K562 (cell line): ENCODE measurements at regions of chr3 and their contacts with region 1.

Region 1: GRCh38 chr3:170414202-170414663 is 4.4 kb upstream of the CLDN11 start:
- DNase-seq: peak; percentile 58 to 75 (median 63)
- ATAC-seq: peak; percentile 85
- H3K4me3 ChIP-seq: no peak overlapping the region
- H3K27ac ChIP-seq: no peak overlapping the region
- H3K4me1 ChIP-seq: peaks cover 0 to 9% of the 10 kb centered on the region in 2 experiments; a peak in 1 of 5 replicates
- H3K27me3 ChIP-seq: no peaks in the 10 kb centered on the region
- CTCF ChIP-seq: peak; percentile 91 to 98 (median 93)
- EP300 ChIP-seq: no peak
- POLR2A ChIP-seq: no peak
- RAD21 ChIP-seq: peak; percentile 99

Region 2: GRCh38 chr3:169764452-169765274 is 649.6 kb before region 1 on chr3 and contains the start of gene TERC:
- CTCF ChIA-PET with region 1: no interaction called
- POLR2A ChIA-PET with region 1: no interaction called
- in situ Hi-C with region 1: no loop called
- intact Hi-C with region 1: loop called (anchors 5 kb)
- DNase-seq: peak; percentile 74 to 93 (median 82)
- ATAC-seq: peak; percentile 96
- H3K4me3 ChIP-seq: peak within 1 kb of the TSS; percentile 71
- H3K27ac ChIP-seq: peak within 1 kb of the TSS; percentile 95
- H3K4me1 ChIP-seq: peaks cover 6 to 20% of the 10 kb centered on the region in 2 experiments
- H3K27me3 ChIP-seq: no peaks in the 10 kb centered on the region
- CTCF ChIP-seq: no peak
- EP300 ChIP-seq: no peak
- POLR2A ChIP-seq: peak; percentile 96
- RAD21 ChIP-seq: peak in 1 of 2 experiments; percentile 14; a peak in 1 of 4 replicates
- polyA plus RNA-seq, gene TERC: not detected

Region 3: DNA sequence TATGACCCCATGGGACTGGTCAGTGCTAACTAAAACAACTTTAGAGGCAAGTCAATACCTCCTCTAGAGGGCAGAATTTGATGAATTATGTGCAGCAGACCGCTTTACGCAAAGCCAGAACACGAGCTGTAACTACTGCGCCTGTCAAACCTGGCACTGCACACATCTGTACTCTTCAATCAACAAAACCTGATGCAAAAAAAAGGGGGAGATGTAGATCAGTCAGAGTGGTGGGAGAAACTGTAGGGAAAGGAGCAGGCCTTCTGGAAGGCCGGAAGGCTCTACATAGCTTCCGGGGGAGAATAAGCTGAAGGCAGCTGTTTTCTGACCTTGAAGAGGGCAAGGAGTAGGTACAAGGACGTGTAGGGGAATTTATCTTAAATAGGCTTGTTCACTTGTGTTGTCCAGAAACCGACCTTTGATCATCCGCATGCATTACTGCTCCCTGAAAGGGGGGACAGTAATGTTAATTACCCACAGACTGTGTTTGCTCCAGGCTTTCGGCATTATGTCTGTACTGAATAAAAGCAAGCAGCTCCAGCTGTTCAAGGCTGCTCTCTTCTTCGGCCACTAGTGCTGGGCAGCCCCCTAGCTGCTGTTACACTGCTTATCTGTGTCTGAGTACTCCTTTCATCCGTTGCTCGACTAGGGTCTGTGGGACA is 335.5 kb before region 1 on chr3:
- CTCF ChIA-PET with region 1: no interaction called
- POLR2A ChIA-PET with region 1: no interaction called
- in situ Hi-C with region 1: no loop called
- intact Hi-C with region 1: loop called (anchors 5 kb)
- DNase-seq: peak in 1 of 4 experiments; percentile 35
- ATAC-seq: peak; percentile 87
- H3K4me3 ChIP-seq: no peak overlapping the region
- H3K27ac ChIP-seq: no peak overlapping the region
- H3K4me1 ChIP-seq: peaks cover 0 to 14% of the 10 kb centered on the region in 2 experiments; a peak in 4 of 5 replicates
- H3K27me3 ChIP-seq: no peaks in the 10 kb centered on the region
- CTCF ChIP-seq: peak; percentile 34 to 42 (median 36); a peak in 5 of 6 replicates
- EP300 ChIP-seq: no peak
- POLR2A ChIP-seq: no peak
- RAD21 ChIP-seq: peak in 1 of 2 experiments; percentile 52; a peak in 2 of 4 replicates

Region 4: GRCh38 chr3:170307671-170308403 is 106.4 kb before region 1 on chr3:
- CTCF ChIA-PET with region 1: interaction called, 20 read pairs
- POLR2A ChIA-PET with region 1: no interaction called
- in situ Hi-C with region 1: loop called (anchors 10 kb)
- intact Hi-C with region 1: loop called (anchors 1 kb)
- DNase-seq: peak in 1 of 4 experiments; percentile 17
- ATAC-seq: peak; percentile 43; the same call in 2 of the 3 replicates
- H3K4me3 ChIP-seq: no peak overlapping the region
- H3K27ac ChIP-seq: no peak overlapping the region; the same call in 2 of the 3 replicates
- H3K4me1 ChIP-seq: peaks cover 0 to 5% of the 10 kb centered on the region in 2 experiments; a peak in 1 of 5 replicates
- H3K27me3 ChIP-seq: no peaks in the 10 kb centered on the region
- CTCF ChIP-seq: no peak
- EP300 ChIP-seq: no peak
- POLR2A ChIP-seq: no peak
- RAD21 ChIP-seq: no peak

Region 5: GRCh38 chr3:170440346-170440745 is 26.1 kb after region 1 on chr3:
- CTCF ChIA-PET with region 1: no interaction called
- POLR2A ChIA-PET with region 1: no interaction called
- in situ Hi-C with region 1: no loop called
- intact Hi-C with region 1: no loop called
- DNase-seq: no peak
- ATAC-seq: no peak
- H3K4me3 ChIP-seq: no peak overlapping the region
- H3K27ac ChIP-seq: no peak overlapping the region
- H3K4me1 ChIP-seq: peaks cover 3 to 6% of the 10 kb centered on the region in 2 experiments; a peak in 2 of 5 replicates
- H3K27me3 ChIP-seq: peaks cover 0 to 8% of the 10 kb centered on the region in 2 experiments; a peak in 1 of 5 replicates
- CTCF ChIP-seq: no peak
- EP300 ChIP-seq: no peak
- POLR2A ChIP-seq: no peak
- RAD21 ChIP-seq: no peak

Region 6: GRCh38 chr3:170499565-170500156 is 85.4 kb after region 1 on chr3:
- CTCF ChIA-PET with region 1: no interaction called
- POLR2A ChIA-PET with region 1: no interaction called
- in situ Hi-C with region 1: no loop called
- intact Hi-C with region 1: loop called (anchors 1 kb)
- DNase-seq: peak; percentile 22 to 64 (median 44)
- ATAC-seq: peak; percentile 98
- H3K4me3 ChIP-seq: no peak overlapping the region
- H3K27ac ChIP-seq: no peak overlapping the region
- H3K4me1 ChIP-seq: peaks cover 0 to 10% of the 10 kb centered on the region in 2 experiments; a peak in 2 of 5 replicates
- H3K27me3 ChIP-seq: no peaks in the 10 kb centered on the region; a peak in 1 of 5 replicates
- CTCF ChIP-seq: peak; percentile 73 to 76 (median 75)
- EP300 ChIP-seq: no peak
- POLR2A ChIP-seq: no peak
- RAD21 ChIP-seq: peak; percentile 60 to 69

Region 7: GRCh38 chr3:170689893-170690660 is 275.8 kb after region 1 on chr3:
- CTCF ChIA-PET with region 1: interaction called, 5 read pairs
- POLR2A ChIA-PET with region 1: no interaction called
- in situ Hi-C with region 1: no loop called
- intact Hi-C with region 1: loop called (anchors 1 kb)
- DNase-seq: peak; percentile 81 to 90 (median 84)
- ATAC-seq: peak; percentile 100
- H3K4me3 ChIP-seq: no peak overlapping the region
- H3K27ac ChIP-seq: no peak overlapping the region
- H3K4me1 ChIP-seq: peaks cover 12 to 19% of the 10 kb centered on the region in 2 experiments
- H3K27me3 ChIP-seq: no peaks in the 10 kb centered on the region
- CTCF ChIP-seq: peak; percentile 88 to 95 (median 91)
- EP300 ChIP-seq: 0 out of 2 replicates have a peak, but pooled peaks have one; percentile 6
- POLR2A ChIP-seq: no peak
- RAD21 ChIP-seq: peak; percentile 92 to 94